ENCODE measurements at regions of chr10 and their contacts with region 1.

Region 1: GRCh38 chr10:50152792-50153272 is 85.1 kb downstream of the WASHC2A start:
- DNase-seq: no peak
- H3K4me3 ChIP-seq: no peak overlapping the region
- H3K27ac ChIP-seq: no peak overlapping the region
- H3K4me1 ChIP-seq: peaks cover 2% of the 10 kb centered on the region
- H3K27me3 ChIP-seq: no peaks in the 10 kb centered on the region
- CTCF ChIP-seq: no peak
- EP300 ChIP-seq: no peak
- POLR2A ChIP-seq: no peak

Region 2: DNA sequence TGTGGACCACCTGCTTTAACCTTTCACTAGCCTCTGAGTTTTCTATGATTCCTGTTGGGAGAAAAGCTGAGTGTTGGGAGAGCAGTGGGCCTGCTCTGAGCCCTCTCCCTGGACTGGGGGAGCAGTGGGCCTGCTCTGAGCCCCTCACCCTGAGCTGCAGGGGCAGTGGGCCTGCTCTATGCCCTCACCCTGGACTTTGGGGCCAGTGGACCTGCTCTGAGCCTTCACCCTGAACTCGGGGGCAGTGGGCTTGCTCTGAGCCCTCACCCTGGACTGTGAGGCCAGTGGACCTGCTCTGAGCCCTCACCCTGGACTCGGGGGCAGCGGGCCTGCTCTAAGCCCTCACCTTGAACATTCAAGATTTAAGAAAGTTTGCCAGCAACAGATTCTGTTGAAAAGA is 131.2 kb before region 1 on chr10:
- intact Hi-C with region 1: loop called in 1 of 4 experiments (anchors 10 kb)
- DNase-seq: no peak
- H3K4me3 ChIP-seq: no peak overlapping the region
- H3K27ac ChIP-seq: no peak overlapping the region
- H3K4me1 ChIP-seq: no peaks in the 10 kb centered on the region
- H3K27me3 ChIP-seq: no peaks in the 10 kb centered on the region
- CTCF ChIP-seq: no peak
- EP300 ChIP-seq: no peak
- POLR2A ChIP-seq: no peak

Region 3: DNA sequence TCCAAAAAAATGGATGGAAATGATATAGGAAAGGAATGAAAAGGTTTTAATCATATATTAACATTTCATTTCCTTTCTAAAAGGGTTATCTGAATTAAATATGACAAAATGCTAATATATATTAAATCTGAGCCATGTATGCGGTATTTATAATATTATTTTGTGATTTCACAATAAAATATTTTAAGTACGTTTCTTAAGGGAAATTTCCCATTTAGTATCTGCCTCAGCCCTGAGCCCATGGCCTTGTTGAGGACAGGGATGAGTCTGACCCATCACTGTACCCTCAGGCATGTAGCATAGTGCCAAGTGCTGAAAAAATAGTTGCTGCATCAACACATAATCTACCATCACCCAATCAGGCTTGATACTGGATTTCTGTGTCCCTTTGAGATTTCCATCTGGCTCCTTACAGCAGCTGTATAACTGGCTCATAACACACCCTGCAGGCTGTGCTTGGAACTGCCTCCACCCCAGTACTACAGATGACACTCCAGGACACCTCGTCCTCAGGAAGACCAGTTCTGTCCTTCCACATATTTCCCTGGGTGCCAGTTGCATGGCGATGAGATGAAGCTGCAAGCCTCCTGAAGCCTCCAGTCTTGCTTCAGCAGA is 157.8 kb after region 1 on chr10:
- intact Hi-C with region 1: no loop called
- DNase-seq: no peak
- H3K4me3 ChIP-seq: no peak overlapping the region
- H3K27ac ChIP-seq: no peak overlapping the region
- H3K4me1 ChIP-seq: peaks cover 4% of the 10 kb centered on the region
- H3K27me3 ChIP-seq: no peaks in the 10 kb centered on the region
- CTCF ChIP-seq: no peak
- EP300 ChIP-seq: no peak
- POLR2A ChIP-seq: no peak

Region 4: DNA sequence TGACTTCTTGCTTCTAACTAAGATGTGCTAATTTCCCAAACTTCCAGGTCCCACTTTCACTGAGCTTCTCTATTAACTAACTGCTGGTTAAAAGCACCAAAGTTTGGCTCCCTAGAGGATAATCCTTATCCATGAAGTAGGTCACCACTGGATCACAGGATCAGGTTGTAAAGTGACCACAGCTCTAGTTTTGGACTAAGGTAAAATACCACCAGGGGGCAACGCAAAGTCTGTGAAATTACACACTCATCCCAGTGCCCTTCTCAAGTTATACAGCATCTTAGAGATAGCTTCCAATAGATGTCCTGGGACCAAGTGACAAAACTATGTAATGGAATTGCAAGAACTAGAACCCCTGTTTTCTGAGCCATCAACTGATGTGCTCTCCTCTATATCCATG is 214.9 kb after region 1 on chr10:
- intact Hi-C with region 1: no loop called
- DNase-seq: peak in 1 of 5 donors; percentile 21
- H3K4me3 ChIP-seq: no peak overlapping the region
- H3K27ac ChIP-seq: no peak overlapping the region
- H3K4me1 ChIP-seq: no peaks in the 10 kb centered on the region
- H3K27me3 ChIP-seq: no peaks in the 10 kb centered on the region
- CTCF ChIP-seq: no peak
- EP300 ChIP-seq: no peak
- POLR2A ChIP-seq: no peak